ENCODE measurements at regions of chr17 and their contacts with region 1.

Region 1: GRCh38 chr17:69567130-69567529 is 152.6 kb downstream of the MAP2K6 start:
- DNase-seq: no peak
- ATAC-seq: no peak
- H3K4me3 ChIP-seq: no peak overlapping the region
- H3K27ac ChIP-seq: no peak overlapping the region
- H3K4me1 ChIP-seq: no peaks in the 10 kb centered on the region
- H3K27me3 ChIP-seq: no peaks in the 10 kb centered on the region
- CTCF ChIP-seq: no peak

Region 2: DNA sequence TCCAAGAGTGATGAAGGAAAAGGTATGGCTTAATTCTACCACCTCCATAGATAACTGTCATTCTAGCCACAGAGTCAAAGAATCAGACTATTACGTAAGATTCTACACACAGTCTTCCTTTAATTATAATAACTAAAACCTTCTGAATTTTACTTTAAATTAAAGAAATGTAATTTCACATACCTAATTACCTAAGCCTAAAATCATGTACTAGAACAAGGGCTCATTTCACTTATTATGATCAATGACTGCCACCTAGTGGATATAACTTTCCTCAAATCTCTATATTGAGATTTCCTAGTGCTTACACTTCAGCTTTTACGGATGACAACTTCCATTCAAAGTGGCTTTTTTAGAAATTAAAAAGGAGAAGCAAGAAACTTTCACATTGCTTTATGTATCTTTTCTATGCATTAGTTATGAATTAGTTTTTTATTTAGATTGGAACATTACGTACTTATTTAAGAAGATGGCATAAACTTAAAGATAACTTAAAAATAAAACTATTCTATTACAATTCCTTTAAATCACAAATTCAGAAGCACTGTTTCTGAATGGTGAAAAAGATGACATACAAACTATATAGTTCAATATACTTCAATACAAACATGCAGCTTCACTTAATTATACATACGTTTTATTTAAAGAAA is 320.3 kb before region 1 on chr17:
- intact Hi-C with region 1: no loop called
- DNase-seq: no peak
- ATAC-seq: peak; percentile 47
- H3K4me3 ChIP-seq: no peak overlapping the region
- H3K27ac ChIP-seq: no peak overlapping the region
- H3K4me1 ChIP-seq: no peaks in the 10 kb centered on the region
- H3K27me3 ChIP-seq: no peaks in the 10 kb centered on the region
- CTCF ChIP-seq: peak; percentile 66

Region 3: GRCh38 chr17:69672924-69673323 is 105.8 kb after region 1 on chr17:
- intact Hi-C with region 1: no loop called
- DNase-seq: no peak
- ATAC-seq: no peak
- H3K4me3 ChIP-seq: no peak overlapping the region
- H3K27ac ChIP-seq: no peak overlapping the region
- H3K4me1 ChIP-seq: no peaks in the 10 kb centered on the region
- H3K27me3 ChIP-seq: no peaks in the 10 kb centered on the region
- CTCF ChIP-seq: no peak

Region 4: GRCh38 chr17:69743091-69743490 is 176.0 kb after region 1 on chr17:
- intact Hi-C with region 1: no loop called
- DNase-seq: no peak
- ATAC-seq: no peak
- H3K4me3 ChIP-seq: no peak overlapping the region
- H3K27ac ChIP-seq: no peak overlapping the region
- H3K4me1 ChIP-seq: no peaks in the 10 kb centered on the region
- H3K27me3 ChIP-seq: no peaks in the 10 kb centered on the region
- CTCF ChIP-seq: no peak

Region 5: DNA sequence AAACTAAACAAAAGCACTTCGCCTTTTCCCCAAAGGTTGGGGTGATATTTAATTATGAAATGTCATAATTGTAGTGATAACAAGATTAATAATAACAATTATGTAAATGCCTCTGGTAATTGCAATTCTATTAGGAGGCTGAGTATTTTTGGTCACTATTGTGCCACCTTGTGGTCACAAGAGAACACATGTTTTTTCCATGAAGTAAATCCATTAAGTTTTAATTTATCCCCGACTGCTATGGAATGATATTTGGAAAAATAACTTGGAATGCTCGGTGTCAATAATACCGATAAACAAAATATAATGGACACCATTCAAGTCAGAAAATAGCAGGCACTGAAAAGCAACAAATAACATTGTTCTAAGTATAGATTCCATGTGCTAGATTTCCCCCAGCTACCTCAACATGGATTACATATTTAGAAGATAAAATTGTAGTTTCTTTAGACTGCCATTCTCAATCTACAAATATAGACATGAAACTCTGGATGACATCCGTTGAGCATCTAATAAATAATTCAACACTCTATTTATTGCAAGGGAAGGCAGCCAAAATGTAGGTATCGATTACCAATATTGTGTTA is 577.2 kb after region 1 on chr17:
- intact Hi-C with region 1: loop called (anchors 10 kb)
- DNase-seq: no peak
- ATAC-seq: peak; percentile 53
- H3K4me3 ChIP-seq: no peak overlapping the region
- H3K27ac ChIP-seq: no peak overlapping the region
- H3K4me1 ChIP-seq: no peaks in the 10 kb centered on the region
- H3K27me3 ChIP-seq: no peaks in the 10 kb centered on the region
- CTCF ChIP-seq: peak; percentile 71